AG04450 (cell line): ENCODE measurements at regions of chr3 and their contacts with region 1.

Region 1: GRCh38 chr3:179015551-179016020 is 56.0 kb downstream of the ZMAT3 start:
- DNase-seq: peak; percentile 59
- H3K4me3 ChIP-seq: no peak overlapping the region
- H3K27ac ChIP-seq: no peak overlapping the region
- H3K27me3 ChIP-seq: no peaks in the 10 kb centered on the region
- CTCF ChIP-seq: peak; percentile 84

Region 2: DNA sequence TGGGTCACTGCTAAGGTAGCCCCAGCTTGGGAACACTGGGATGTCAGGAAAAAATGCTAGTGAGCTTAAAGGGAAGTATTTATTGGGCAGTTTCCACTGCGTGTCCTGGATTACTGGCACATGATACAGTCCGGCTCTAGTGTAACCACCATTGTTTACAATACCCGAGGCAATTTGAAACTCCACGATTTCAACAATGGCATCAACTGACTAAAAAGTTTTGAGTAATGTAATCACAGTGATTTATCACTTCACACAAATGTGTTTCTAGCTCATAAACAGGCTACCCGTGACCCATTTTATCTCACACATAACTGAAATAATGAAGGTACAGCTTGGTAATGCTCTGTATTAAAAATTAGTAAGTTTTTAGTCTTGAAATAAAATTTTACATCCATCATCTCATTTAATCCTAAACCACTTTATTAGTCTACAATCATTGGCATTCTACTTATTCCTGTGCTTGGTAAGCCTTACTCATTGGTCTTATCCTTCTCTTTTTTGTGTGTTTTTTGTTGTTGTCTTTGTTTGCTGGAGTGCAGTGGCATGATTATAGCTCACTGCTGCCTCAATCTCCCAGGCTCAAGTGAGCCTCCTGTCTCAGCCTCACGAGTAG is 48.5 kb after region 1 on chr3:
- CTCF ChIA-PET with region 1: interaction called, 14 read pairs
- POLR2A ChIA-PET with region 1: no interaction called
- DNase-seq: no peak
- H3K4me3 ChIP-seq: no peak overlapping the region
- H3K27ac ChIP-seq: no peak overlapping the region
- H3K27me3 ChIP-seq: no peaks in the 10 kb centered on the region
- CTCF ChIP-seq: no peak

Region 3: GRCh38 chr3:179083977-179084376 is 68.4 kb after region 1 on chr3:
- CTCF ChIA-PET with region 1: interaction called, 10 read pairs
- POLR2A ChIA-PET with region 1: no interaction called
- DNase-seq: no peak
- H3K4me3 ChIP-seq: no peak overlapping the region
- H3K27ac ChIP-seq: no peak overlapping the region
- H3K27me3 ChIP-seq: no peaks in the 10 kb centered on the region
- CTCF ChIP-seq: no peak

Region 4: GRCh38 chr3:179147873-179148615 is 132.5 kb after region 1 on chr3 and contains the start of gene PIK3CA:
- CTCF ChIA-PET with region 1: interaction called, 10 read pairs
- POLR2A ChIA-PET with region 1: no interaction called
- DNase-seq: peak; percentile 97
- H3K4me3 ChIP-seq: peak within 1 kb of the TSS; percentile 78
- H3K27ac ChIP-seq: peak within 1 kb of the TSS; percentile 76
- H3K27me3 ChIP-seq: no peaks in the 10 kb centered on the region
- CTCF ChIP-seq: no peak
- polyA plus RNA-seq, gene PIK3CA: 13.9 and 21.4 TPM in 2 replicates